ENCODE measurements at regions of chr5 and their contacts with region 1.

Region 1: DNA sequence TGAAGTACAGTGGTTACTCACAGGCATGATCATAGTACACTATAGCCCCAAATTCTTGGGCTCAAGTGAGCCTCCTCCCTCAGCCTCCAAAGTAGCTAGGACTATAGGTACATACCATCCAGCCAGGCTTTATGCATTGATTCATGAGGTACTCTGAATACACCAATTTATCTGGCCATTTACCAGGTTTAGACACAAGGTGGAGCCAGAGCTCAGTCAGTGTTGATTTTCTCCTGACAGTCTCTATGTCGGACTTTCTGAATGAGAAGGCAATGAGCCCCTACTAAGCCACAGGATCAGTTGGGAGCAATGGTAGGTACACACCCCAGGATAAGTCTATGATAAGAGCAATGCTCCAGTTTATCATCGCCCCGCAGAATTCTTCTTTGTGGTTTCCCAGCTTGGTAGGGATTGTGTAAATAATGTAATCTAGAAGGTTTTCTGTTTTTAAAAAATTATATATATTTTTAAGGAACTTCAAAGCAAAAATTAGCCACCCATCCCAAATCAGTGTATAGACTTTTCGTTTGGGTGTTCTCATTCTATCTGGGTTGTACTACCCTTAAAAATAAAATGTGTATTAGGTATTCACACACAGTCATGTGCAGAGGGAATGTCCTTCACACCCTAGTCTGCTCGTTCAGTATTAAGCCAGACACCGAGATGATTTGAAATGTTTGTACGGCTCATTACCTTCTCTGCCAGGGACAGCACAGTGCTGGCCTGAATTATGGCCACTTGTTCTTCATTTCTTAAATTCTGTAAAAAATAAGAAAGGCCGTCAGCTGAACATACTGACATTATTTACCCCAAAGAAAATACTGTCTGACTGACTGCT is 118.4 kb upstream of the DPYSL3 start:
- DNase-seq: peak in 1 of 2 donors; percentile 13
- ATAC-seq: peak; percentile 65 to 77
- H3K4me3 ChIP-seq: no peak overlapping the region
- H3K27ac ChIP-seq: no peak overlapping the region
- H3K4me1 ChIP-seq: no peaks in the 10 kb centered on the region
- H3K27me3 ChIP-seq: no peaks in the 10 kb centered on the region
- CTCF ChIP-seq: peak in 4 of 5 experiments; percentile 26 to 63 (median 51)
- POLR2A ChIP-seq: no peak

Region 2: GRCh38 chr5:147782110-147783028 is 154.1 kb after region 1 on chr5 and contains the start of gene JAKMIP2:
- in situ Hi-C with region 1: no loop called
- intact Hi-C with region 1: no loop called
- DNase-seq: peak; percentile 8 to 35
- ATAC-seq: no peak
- H3K4me3 ChIP-seq: no peak within 1 kb of the TSS
- H3K27ac ChIP-seq: no peak within 1 kb of the TSS
- H3K4me1 ChIP-seq: no peaks in the 10 kb centered on the region
- H3K27me3 ChIP-seq: peaks cover 0 to 3% (median 0%) of the 10 kb centered on the region in 3 donors
- CTCF ChIP-seq: no peak
- POLR2A ChIP-seq: no peak
- total RNA-seq, gene JAKMIP2: 0.20 TPM in 1 of 4 donors, not detected in the others

Region 3: DNA sequence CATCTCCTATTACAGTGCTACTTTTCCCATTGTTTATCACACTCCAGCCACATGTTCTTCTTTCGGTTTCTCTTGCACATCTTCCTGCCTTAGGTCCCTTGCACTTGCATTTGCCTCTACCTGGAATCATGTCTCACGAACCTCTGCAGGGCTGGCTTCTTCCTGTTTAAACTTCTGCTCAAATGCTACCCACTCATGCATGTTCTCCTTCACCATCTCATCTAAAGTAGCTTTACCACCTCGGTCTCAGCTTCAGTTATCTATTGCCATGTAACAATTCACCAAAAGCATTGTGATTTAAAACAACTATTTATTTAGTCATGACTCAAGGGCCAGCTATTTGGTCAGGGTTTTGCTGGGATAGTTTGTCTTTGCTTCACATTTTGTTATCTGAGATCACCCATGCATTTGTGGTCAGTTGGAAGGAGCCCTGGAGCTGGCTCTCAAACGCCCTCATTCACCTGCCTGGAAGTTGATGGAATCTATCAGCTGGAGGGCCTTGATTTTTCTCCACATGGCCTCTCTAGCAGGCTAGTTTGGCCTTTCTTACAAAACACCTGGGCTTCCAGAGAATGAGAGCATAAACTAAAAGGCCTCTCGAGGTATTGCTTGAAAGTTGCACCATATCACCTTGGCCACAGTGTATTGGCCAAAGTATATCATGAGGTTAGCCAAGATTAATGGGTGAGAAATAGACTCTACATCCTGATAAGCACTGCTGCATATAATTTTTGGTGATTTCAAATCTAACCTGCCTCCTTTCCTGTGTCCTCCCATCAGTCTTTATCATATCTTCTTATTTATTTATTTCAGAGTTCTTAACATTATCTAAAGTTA is 181.8 kb after region 1 on chr5:
- in situ Hi-C with region 1: loop called in 2 of 4 experiments (anchors 10 to 25 kb)
- intact Hi-C with region 1: no loop called
- DNase-seq: no peak
- ATAC-seq: no peak
- H3K4me3 ChIP-seq: no peak overlapping the region
- H3K27ac ChIP-seq: no peak overlapping the region
- H3K4me1 ChIP-seq: no peaks in the 10 kb centered on the region
- H3K27me3 ChIP-seq: no peaks in the 10 kb centered on the region
- CTCF ChIP-seq: no peak
- POLR2A ChIP-seq: no peak

Region 4: GRCh38 chr5:147822686-147823491 is 194.6 kb after region 1 on chr5:
- in situ Hi-C with region 1: loop called in 3 of 4 experiments (anchors 5 to 25 kb)
- intact Hi-C with region 1: loop called (anchors 1 kb)
- DNase-seq: no peak
- ATAC-seq: peak in 1 of 2 donors; percentile 50
- H3K4me3 ChIP-seq: no peak overlapping the region
- H3K27ac ChIP-seq: no peak overlapping the region
- H3K4me1 ChIP-seq: no peaks in the 10 kb centered on the region
- H3K27me3 ChIP-seq: no peaks in the 10 kb centered on the region
- CTCF ChIP-seq: peak; percentile 27 to 66 (median 52)
- POLR2A ChIP-seq: no peak